Activated CD8-positive, alpha-beta T cell treated with anti-CD3 and anti-CD28 coated beads for 36 hours (primary cell): ENCODE measurements at regions of chr17 and their contacts with region 1.

Region 1: DNA sequence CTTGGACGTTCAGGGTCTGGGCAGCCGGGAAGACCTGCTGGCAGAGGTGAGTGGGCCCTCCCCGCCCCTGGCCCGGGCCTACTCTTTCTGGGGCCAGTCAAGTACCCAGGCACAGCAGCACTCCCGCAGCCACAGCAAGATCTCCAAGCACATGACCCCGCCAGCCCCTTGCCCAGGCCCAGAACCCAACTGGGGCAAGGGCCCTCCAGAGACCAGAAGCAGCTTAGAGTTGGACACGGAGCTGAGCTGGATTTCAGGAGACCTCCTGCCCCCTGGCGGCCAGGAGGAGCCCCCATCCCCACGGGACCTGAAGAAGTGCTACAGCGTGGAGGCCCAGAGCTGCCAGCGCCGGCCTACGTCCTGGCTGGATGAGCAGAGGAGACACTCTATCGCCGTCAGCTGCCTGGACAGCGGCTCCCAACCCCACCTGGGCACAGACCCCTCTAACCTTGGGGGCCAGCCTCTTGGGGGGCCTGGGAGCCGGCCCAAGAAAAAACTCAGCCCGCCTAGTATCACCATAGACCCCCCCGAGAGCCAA is 8.6 kb upstream of the ABCC3 start:
- DNase-seq: peak; percentile 81
- ATAC-seq: peak; percentile 82
- H3K4me3 Mint-ChIP-seq: no peak overlapping the region
- H3K27ac Mint-ChIP-seq: no peak overlapping the region
- H3K4me1 Mint-ChIP-seq: peaks cover 2% of the 10 kb centered on the region
- H3K27me3 Mint-ChIP-seq: peaks cover 30% of the 10 kb centered on the region
- CTCF ChIP-seq: peak; percentile 75

Region 2: GRCh38 chr17:50478391-50479381 is 147.4 kb before region 1 on chr17 and contains the start of gene RSAD1:
- CTCF ChIA-PET with region 1: interaction called, 57 read pairs
- POLR2A ChIA-PET with region 1: no interaction called
- intact Hi-C with region 1: loop called (anchors 10 kb)
- DNase-seq: peak; percentile 90
- ATAC-seq: peak; percentile 94
- H3K4me3 Mint-ChIP-seq: peak within 1 kb of the TSS; percentile 89
- H3K27ac Mint-ChIP-seq: peak within 1 kb of the TSS; percentile 93
- H3K4me1 Mint-ChIP-seq: peaks cover 22% of the 10 kb centered on the region
- H3K27me3 Mint-ChIP-seq: peaks cover 3% of the 10 kb centered on the region
- CTCF ChIP-seq: peak; percentile 86
- total RNA-seq, gene RSAD1: 39.2 to 40.7 TPM

Region 3: GRCh38 chr17:50547035-50547735 is 78.9 kb before region 1 on chr17 and contains the start of gene SPATA20:
- CTCF ChIA-PET with region 1: interaction called, 28 read pairs
- POLR2A ChIA-PET with region 1: no interaction called
- intact Hi-C with region 1: loop called (anchors 2 kb)
- DNase-seq: peak; percentile 95
- ATAC-seq: peak; percentile 92
- H3K4me3 Mint-ChIP-seq: peak within 1 kb of the TSS; percentile 82
- H3K27ac Mint-ChIP-seq: peak within 1 kb of the TSS; percentile 76
- H3K4me1 Mint-ChIP-seq: peaks cover 9% of the 10 kb centered on the region
- H3K27me3 Mint-ChIP-seq: peaks cover 2% of the 10 kb centered on the region
- CTCF ChIP-seq: peak; percentile 99
- total RNA-seq, gene SPATA20: 29.0 to 36.2 TPM

Region 4: DNA sequence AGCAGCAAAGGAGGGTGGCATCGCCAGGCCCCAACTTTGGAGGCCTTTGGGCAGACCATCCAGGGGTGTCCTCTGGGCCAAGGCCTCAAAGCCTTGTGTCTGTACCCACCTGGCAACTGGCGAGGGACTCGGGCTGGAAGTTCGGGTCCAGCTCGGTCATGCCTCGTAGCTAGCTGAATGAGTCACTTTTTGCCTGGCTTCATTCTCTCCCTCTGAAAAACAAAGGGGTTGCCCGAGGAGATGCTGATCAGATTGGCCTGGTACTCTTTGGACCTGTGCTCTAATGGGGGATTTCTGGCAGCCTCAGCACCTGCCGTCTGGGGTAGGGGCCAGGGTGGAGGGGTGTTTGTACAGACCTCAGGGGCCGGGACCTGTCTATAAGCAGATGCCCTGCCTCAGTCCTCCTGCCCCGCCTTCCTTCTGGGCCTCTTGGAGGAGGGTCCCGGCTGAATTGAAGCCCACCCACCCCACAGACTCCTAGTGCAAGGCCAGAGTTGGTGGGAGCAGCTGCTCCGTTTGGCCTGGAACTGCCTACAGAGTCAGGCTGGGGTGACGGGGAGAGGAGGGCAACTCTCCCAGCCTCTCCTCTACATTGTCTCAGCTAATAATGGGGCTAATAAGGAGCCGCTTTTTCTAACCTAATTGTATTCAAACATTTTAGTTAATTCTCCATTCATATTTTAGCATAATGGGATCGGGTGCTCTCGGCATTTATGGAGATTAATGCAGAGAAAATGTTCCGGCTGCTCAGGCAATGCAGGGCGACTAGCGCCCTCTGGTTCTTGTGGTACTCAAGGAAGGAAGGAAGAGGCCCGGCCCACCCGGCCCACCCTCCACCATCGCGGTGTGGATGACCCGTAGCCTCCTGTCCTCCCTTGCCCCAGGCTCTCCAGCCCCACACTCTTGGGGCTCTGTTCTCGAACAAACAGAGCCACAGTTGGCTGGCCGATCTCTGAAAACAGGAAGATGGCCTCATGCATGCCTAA is 12.8 kb before region 1 on chr17:
- CTCF ChIA-PET with region 1: interaction called, 11 read pairs
- POLR2A ChIA-PET with region 1: interaction called, 3 read pairs
- intact Hi-C with region 1: no loop called
- DNase-seq: peak; percentile 23
- ATAC-seq: no peak
- H3K4me3 Mint-ChIP-seq: no peak overlapping the region
- H3K27ac Mint-ChIP-seq: no peak overlapping the region
- H3K4me1 Mint-ChIP-seq: peaks cover 7% of the 10 kb centered on the region
- H3K27me3 Mint-ChIP-seq: peaks cover 1% of the 10 kb centered on the region
- CTCF ChIP-seq: peak; percentile 23

Region 5: DNA sequence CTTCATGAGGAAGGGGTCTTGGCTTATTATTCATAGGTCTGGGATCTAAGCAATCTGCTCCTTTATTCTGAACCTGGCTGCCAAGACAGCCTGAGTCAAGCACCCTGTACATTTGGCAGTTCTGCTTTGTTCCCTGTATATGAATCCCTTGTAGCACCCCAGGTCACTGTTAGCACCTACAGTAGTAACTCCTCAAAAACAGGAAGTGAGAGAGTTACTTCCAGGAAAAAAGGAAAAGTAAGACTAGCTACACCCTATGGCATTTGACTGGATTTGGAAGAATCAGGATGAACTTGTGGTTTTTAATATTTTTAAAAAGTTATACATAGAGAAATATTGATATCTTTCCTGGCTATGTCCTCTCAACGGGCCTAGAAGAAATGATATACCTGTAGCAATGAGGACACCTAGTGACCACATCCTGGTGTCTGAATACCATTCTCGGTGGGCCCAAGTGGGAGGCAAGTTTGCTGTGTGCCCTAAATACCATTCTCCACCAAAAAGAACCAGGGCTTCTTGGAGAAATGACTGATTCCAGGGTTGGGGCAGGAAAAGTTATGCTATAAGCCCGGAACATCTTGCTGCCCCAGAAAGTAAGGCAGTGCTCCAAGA is 71.7 kb after region 1 on chr17:
- CTCF ChIA-PET with region 1: interaction called, 34 read pairs
- POLR2A ChIA-PET with region 1: no interaction called
- intact Hi-C with region 1: no loop called
- DNase-seq: no peak
- ATAC-seq: peak; percentile 45
- H3K4me3 Mint-ChIP-seq: no peak overlapping the region
- H3K27ac Mint-ChIP-seq: peak overlapping the region; percentile 66
- H3K4me1 Mint-ChIP-seq: peaks cover 24% of the 10 kb centered on the region
- H3K27me3 Mint-ChIP-seq: no peaks in the 10 kb centered on the region
- CTCF ChIP-seq: no peak

Region 6: GRCh38 chr17:50865984-50866774 is 240.1 kb after region 1 on chr17 and contains the start of gene TOB1:
- CTCF ChIA-PET with region 1: no interaction called
- POLR2A ChIA-PET with region 1: no interaction called
- intact Hi-C with region 1: no loop called
- DNase-seq: peak; percentile 96
- ATAC-seq: peak; percentile 81
- H3K4me3 Mint-ChIP-seq: peak within 1 kb of the TSS; percentile 88
- H3K27ac Mint-ChIP-seq: peak within 1 kb of the TSS; percentile 93
- H3K4me1 Mint-ChIP-seq: peaks cover 43% of the 10 kb centered on the region
- H3K27me3 Mint-ChIP-seq: no peaks in the 10 kb centered on the region
- CTCF ChIP-seq: no peak
- total RNA-seq, gene TOB1: 34.4 to 40.5 TPM